Dendritic cell treated with granulocyte-macrophage colony-stimulating factor and Interleukin-4, amounts not matched to agents 40 ng/mL and 50 ng/mL, for 4 days (primary cell): ENCODE measurements at regions of chr1 and their contacts with region 1.

Region 1: DNA sequence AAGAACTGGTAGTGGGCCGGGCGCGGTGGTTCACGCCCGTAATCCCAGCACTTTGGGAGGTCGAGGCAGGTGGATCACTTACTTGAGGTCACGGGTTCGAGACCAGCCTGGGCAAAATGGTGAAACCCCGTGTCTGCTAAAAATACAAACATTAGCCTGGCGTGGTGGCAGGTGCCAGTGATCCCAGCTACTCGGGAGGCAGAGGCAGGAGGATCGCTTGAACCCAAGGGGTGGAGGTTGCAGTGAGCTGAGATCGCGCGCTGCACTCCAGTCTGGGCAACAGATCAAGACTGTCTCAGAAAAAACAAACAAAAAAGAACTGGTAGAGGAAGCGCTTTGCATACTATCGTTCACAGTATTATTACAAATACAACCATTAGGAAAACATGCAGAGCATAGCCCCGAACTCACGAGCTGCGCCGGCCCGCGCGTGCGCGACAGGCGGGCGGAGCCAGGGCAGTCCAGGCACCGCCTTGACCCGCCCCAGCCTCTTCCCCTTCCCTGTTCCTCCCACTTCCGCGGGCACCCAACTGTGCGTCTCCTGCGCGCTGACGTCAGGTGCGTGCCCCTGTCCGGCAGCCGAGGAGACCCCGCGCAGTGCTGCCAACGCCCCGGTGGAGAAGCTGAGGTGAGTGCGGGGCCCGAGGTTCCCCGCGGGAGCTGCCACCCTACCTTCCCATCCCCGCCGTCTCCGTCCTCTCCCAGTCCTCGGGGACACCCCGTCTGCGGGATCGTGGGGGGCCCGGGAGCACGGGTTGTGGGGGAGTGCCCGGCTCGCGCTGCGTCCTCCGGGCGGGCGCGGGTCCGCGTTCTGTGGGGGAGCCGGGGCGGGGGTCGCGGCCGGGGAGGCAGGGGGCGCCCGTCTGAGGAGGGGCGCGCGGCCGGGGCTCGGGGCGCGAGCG is at the start of gene CDC42:
- H3K4me3 Mint-ChIP-seq: peak within 1 kb of the TSS; percentile 90
- H3K27ac Mint-ChIP-seq: peak within 1 kb of the TSS; percentile 96
- H3K4me1 Mint-ChIP-seq: peaks cover 60% of the 10 kb centered on the region
- H3K27me3 Mint-ChIP-seq: no peaks in the 10 kb centered on the region

Region 2: DNA sequence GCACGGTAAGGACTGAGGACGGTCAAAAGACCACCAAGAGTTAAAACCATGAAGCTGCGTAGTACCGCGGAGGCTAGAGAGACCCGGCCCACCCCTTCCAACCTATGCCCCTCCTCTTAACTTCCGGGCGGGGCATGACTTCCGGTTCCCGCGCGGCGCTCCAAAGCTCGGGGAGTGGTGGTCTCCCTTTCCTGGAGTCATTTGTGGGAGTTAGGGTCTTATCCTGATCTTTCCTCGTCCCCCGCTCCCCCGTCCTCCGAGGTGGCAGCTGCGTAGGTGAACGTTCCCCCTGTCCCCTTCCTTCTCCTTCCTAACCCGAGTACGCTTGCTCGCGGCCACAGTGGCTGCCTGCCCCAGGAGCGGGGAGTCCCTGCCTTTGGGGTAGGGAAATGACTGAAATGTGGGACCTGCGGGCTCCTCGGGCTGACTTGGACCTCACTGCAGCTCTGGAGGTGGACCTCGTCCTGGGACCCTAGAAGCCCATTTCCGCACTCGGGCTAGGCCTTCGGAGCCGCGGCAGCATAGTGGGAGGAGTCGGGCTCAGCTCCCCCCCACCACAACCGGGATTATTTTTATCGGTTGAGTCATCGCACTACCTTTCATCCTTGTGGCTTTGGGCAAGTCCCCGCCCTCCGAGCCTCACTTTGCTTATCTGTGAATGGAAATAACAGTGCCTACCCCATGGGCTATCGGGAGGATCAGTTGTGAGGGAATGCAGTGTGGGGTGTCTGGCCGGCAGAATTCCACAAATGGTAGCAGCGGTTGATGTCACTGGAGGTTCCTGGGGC is 26.8 kb before region 1 on chr1:
- intact Hi-C with region 1: loop called (anchors 2 kb)
- H3K4me3 Mint-ChIP-seq: peak overlapping the region; percentile 97
- H3K27ac Mint-ChIP-seq: peak overlapping the region; percentile 99
- H3K4me1 Mint-ChIP-seq: peaks cover 49% of the 10 kb centered on the region
- H3K27me3 Mint-ChIP-seq: no peaks in the 10 kb centered on the region

Region 3: GRCh38 chr1:23202263-23202749 is 1149.9 kb after region 1 on chr1:
- intact Hi-C with region 1: no loop called
- H3K4me3 Mint-ChIP-seq: no peak overlapping the region
- H3K27ac Mint-ChIP-seq: no peak overlapping the region
- H3K4me1 Mint-ChIP-seq: no peaks in the 10 kb centered on the region
- H3K27me3 Mint-ChIP-seq: peaks cover 17% of the 10 kb centered on the region